ENCODE measurements at regions of chr14 and their contacts with region 1.

Region 1: DNA sequence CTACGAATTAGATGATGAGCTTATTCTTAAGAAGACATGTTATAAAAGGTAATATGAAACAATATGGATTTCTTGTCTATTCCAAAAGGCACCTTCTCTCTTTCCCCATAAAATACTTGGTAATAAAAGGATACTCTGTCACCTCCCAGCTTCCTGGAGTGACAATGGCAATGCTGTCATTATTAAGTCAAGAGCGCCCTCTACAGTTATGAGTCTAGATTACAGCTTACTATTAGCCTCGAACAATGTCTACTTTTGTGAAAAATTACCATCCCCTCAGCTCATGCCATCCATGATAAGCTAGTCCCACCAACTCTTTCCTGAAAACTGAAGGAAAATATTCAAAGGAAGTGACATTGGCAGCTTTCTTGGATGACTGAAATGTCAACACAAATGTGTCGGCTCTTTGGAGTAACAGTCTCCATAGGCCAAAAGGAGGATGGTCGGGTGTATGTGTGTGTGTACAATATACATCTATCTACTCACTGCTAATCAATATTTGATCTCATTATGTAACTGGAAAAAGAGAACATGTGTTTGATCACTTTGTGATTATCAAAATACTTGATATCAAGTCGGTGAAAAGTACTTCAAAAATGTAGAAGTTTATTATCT is 48.7 kb upstream of the CDKN3 start:
- DNase-seq: no peak
- ATAC-seq: peak; percentile 42 to 46
- H3K4me3 ChIP-seq: no peak overlapping the region
- H3K27ac ChIP-seq: no peak overlapping the region
- H3K4me1 ChIP-seq: peaks cover 3% of the 10 kb centered on the region
- H3K27me3 ChIP-seq: no peaks in the 10 kb centered on the region

Region 2: GRCh38 chr14:53295985-53296582 is 1052.0 kb before region 1 on chr14:
- intact Hi-C with region 1: loop called in 3 of 4 experiments (anchors 5 to 10 kb)
- DNase-seq: no peak
- ATAC-seq: no peak
- H3K4me3 ChIP-seq: no peak overlapping the region
- H3K27ac ChIP-seq: no peak overlapping the region
- H3K4me1 ChIP-seq: no peaks in the 10 kb centered on the region
- H3K27me3 ChIP-seq: no peaks in the 10 kb centered on the region

Region 3: GRCh38 chr14:53539489-53540126 is 808.5 kb before region 1 on chr14:
- intact Hi-C with region 1: loop called in 3 of 4 experiments (anchors 5 to 10 kb)
- DNase-seq: peak; percentile 73 to 87 (median 83)
- ATAC-seq: peak; percentile 79 to 90
- H3K4me3 ChIP-seq: no peak overlapping the region
- H3K27ac ChIP-seq: no peak overlapping the region
- H3K4me1 ChIP-seq: peaks cover 3% of the 10 kb centered on the region
- H3K27me3 ChIP-seq: no peaks in the 10 kb centered on the region

Region 4: DNA sequence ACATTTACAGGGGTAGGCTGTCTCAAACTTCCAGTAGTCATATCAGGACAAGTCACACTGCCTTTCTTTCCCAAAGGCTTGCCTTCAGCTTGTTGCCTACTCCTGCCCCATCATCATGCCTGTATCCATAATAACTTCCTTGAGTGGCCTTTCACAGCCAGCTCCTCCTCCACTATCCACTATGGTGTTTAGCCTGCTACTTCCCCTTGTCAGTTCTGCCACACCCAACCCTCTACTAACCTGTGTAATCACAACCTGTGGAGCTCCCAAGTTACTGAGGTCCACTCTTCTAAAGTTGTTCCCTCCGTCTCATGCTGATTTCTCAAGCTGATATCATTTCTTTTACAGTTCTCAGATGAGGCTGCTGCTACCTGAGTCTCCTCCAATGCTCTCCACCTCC is 551.4 kb before region 1 on chr14:
- intact Hi-C with region 1: no loop called
- DNase-seq: no peak
- ATAC-seq: no peak
- H3K4me3 ChIP-seq: no peak overlapping the region
- H3K27ac ChIP-seq: no peak overlapping the region
- H3K4me1 ChIP-seq: no peaks in the 10 kb centered on the region
- H3K27me3 ChIP-seq: no peaks in the 10 kb centered on the region

Region 5: DNA sequence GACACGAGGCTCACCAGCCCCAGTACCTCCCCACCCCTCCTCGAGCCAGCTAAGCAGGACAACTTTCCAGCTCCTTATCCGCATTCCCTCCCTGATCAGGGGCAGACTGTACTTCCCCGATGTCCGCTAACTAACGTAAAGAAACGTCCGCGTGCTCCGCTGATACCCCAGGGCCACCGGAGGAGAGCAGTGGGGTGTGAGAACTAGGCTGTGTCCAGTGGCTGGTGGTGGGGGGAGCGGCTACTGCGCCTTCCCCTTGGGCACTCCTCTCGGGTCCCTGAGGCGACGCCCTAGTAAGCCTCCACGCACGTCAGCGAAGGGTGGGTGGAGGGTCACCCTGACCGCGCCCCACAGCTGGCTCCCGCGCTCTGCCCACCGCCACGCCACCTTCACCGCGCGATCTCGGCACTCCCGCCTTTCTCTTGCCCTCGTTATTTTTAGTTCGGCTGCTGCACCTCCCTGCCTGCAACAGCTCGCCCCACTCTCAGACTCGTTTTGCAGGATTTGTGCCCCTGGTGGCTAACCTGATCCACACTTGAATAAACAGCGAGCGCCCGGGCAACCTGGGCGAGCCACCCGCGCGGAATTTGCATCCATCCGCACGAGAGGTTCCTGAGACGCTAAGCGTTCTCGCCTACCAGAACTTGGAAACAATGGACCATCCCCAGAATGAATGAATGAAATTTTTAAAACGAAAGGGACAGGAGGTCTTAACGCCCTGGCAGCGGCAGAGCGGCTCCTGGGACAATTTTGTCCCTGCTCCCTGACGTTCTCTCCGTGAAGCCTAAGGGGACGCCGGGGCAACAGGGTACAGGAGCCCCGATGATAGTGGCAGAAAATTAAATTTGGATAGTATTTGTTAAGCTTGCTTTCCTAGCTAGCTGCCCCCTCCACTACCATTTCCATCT is 384.5 kb before region 1 on chr14:
- intact Hi-C with region 1: no loop called
- DNase-seq: peak; percentile 48 to 78 (median 76)
- ATAC-seq: peak; percentile 88 to 93
- H3K4me3 ChIP-seq: no peak overlapping the region
- H3K27ac ChIP-seq: no peak overlapping the region
- H3K4me1 ChIP-seq: peaks cover 2% of the 10 kb centered on the region
- H3K27me3 ChIP-seq: no peaks in the 10 kb centered on the region

Region 6: GRCh38 chr14:53975444-53975843 is 372.7 kb before region 1 on chr14:
- intact Hi-C with region 1: no loop called
- DNase-seq: no peak
- ATAC-seq: no peak
- H3K4me3 ChIP-seq: no peak overlapping the region
- H3K27ac ChIP-seq: no peak overlapping the region
- H3K4me1 ChIP-seq: peaks cover 3% of the 10 kb centered on the region
- H3K27me3 ChIP-seq: no peaks in the 10 kb centered on the region

Region 7: GRCh38 chr14:54127526-54127925 is 220.6 kb before region 1 on chr14:
- intact Hi-C with region 1: no loop called
- DNase-seq: no peak
- ATAC-seq: no peak
- H3K4me3 ChIP-seq: no peak overlapping the region
- H3K27ac ChIP-seq: no peak overlapping the region
- H3K4me1 ChIP-seq: no peaks in the 10 kb centered on the region
- H3K27me3 ChIP-seq: no peaks in the 10 kb centered on the region